Endothelial cell of umbilical vein (primary cell): ENCODE measurements at regions of chr9 and their contacts with region 1.

Region 1: DNA sequence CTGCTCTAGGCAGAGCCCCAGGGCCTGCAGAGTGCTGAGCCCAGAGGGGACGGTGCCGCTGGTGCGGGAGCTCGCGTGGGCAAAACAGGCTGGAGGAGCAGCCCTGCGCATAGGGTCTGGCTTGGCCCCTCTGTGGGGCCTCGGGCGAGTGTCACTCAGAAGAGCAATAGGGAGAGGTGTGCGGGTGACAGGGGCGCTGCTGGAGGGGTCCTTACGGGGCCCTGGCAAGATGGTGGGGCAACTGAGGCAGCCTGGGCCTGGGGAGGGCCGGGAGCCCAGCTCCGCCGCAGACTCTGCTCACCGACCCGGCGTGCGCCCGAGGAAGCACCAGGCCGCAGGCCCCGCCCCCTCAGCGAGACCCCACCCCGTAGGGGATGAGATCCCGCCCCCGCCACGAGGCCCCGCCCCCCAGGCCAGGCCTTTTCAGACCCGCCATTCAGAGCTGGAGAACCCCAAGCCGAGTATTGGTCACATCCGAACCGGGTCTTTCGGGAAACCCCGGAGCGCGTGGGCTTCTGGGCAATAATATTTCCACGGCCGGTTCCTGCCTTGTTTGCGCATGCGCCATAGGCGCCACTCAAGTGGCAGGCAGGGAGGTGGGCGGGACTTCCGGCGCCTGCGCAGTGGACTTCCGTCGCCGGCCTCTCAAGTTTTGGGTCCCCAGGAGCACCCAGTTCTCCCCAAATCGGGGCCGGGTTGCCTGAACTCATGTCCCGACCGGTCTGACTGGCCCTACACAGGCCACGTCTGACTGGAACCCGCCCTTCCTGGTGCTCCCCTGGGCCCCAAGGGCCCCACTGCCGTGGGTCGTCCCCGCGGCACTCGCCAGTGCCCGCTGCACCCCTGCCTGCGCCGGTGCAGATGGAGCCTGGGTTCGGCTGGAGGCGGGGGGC is 1.3 kb upstream of the RNF208 start:
- DNase-seq: peak; percentile 98
- H3K4me3 ChIP-seq: peak overlapping the region; percentile 80 to 91 (median 82)
- H3K27ac ChIP-seq: peak overlapping the region; percentile 68
- H3K4me1 ChIP-seq: peaks cover 18% of the 10 kb centered on the region
- H3K27me3 ChIP-seq: no peaks in the 10 kb centered on the region
- CTCF ChIP-seq: no peak
- POLR2A ChIP-seq: peak; percentile 78

Region 2: GRCh38 chr9:135255033-135255840 is 1968.1 kb before region 1 on chr9:
- CTCF ChIA-PET with region 1: no interaction called
- POLR2A ChIA-PET with region 1: no interaction called
- dilution Hi-C with region 1: no loop called
- intact Hi-C with region 1: no loop called
- DNase-seq: no peak
- H3K4me3 ChIP-seq: no peak overlapping the region
- H3K27ac ChIP-seq: no peak overlapping the region
- H3K4me1 ChIP-seq: no peaks in the 10 kb centered on the region
- H3K27me3 ChIP-seq: no peaks in the 10 kb centered on the region
- CTCF ChIP-seq: no peak
- POLR2A ChIP-seq: no peak

Region 3: DNA sequence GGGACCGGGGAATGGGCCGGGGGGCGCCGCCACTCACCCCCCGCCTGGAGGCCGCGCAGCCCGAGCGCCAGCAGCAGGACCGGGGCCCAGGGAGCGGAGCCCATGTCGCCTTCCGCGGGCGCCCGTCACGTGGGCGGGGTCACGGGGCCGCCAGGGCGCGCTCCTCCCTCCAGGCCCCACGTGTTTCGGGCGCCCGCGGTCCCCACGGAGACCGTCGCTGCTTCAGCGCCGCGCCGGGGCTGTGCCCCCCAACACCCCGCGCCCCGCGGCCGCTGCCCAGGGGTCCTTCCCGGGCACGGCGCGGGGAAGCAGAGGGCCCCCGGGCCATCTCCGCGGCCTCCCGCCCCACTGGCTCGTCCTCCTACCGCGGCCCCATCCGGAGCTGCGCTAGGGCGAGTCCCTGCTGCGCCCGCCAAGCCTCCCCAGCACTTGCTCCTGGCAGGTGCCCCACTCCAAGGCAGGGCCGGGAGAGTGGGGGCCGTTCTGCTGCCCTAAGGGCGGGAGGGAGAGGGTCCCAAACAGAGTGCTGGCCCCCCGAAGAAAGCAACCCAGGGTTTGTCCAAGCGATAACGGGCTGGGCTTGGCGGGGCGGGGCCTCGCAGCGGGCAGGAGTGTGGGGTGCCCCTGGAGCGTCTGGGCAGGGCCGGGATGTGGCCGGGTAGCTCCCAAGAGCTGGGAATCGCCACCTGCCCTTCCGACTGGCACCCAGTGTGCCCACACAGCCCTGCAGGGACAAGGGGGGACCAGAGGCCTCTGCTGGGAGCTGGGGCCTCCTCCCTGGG is 108.5 kb before region 1 on chr9 and contains the start of gene DPP7:
- CTCF ChIA-PET with region 1: interaction called, 42 read pairs
- POLR2A ChIA-PET with region 1: no interaction called
- dilution Hi-C with region 1: no loop called
- intact Hi-C with region 1: loop called (anchors 1 kb)
- DNase-seq: peak; percentile 33
- H3K4me3 ChIP-seq: peak within 1 kb of the TSS; percentile 32 to 61 (median 53)
- H3K27ac ChIP-seq: no peak within 1 kb of the TSS
- H3K4me1 ChIP-seq: peaks cover 4% of the 10 kb centered on the region
- H3K27me3 ChIP-seq: no peaks in the 10 kb centered on the region
- CTCF ChIP-seq: no peak
- POLR2A ChIP-seq: peak; percentile 35
- total RNA-seq, gene DPP7: 118 and 149 TPM in 2 replicates

Region 4: GRCh38 chr9:137129456-137130175 is 93.7 kb before region 1 on chr9:
- CTCF ChIA-PET with region 1: interaction called, 11 read pairs
- POLR2A ChIA-PET with region 1: interaction called, 9 read pairs
- dilution Hi-C with region 1: no loop called
- intact Hi-C with region 1: loop called (anchors 1 kb)
- DNase-seq: peak; percentile 92
- H3K4me3 ChIP-seq: peak overlapping the region; percentile 39 to 63 (median 51)
- H3K27ac ChIP-seq: peak overlapping the region; percentile 40
- H3K4me1 ChIP-seq: peaks cover 26% of the 10 kb centered on the region
- H3K27me3 ChIP-seq: no peaks in the 10 kb centered on the region
- CTCF ChIP-seq: no peak
- POLR2A ChIP-seq: peak; percentile 94

Region 5: GRCh38 chr9:137188490-137189296 is 34.6 kb before region 1 on chr9 and contains the starts of genes ANAPC2 and SSNA1:
- CTCF ChIA-PET with region 1: interaction called, 30 read pairs
- POLR2A ChIA-PET with region 1: no interaction called
- dilution Hi-C with region 1: no loop called
- intact Hi-C with region 1: loop called (anchors 1 kb)
- DNase-seq: peak; percentile 95
- H3K4me3 ChIP-seq: peak within 1 kb of the TSS; percentile 57 to 86 (median 64)
- H3K27ac ChIP-seq: peak within 1 kb of the TSS; percentile 48
- H3K4me1 ChIP-seq: peaks cover 17% of the 10 kb centered on the region
- H3K27me3 ChIP-seq: no peaks in the 10 kb centered on the region
- CTCF ChIP-seq: peak; percentile 32 to 40
- POLR2A ChIP-seq: peak; percentile 80
- total RNA-seq, gene ANAPC2: 69.2 and 70.0 TPM in 2 replicates
- total RNA-seq, gene SSNA1: 89.0 and 90.5 TPM in 2 replicates